Right ventricle myocardium superior (tissue), 1 donor: ENCODE measurements at regions of chr10 and their contacts with region 1.

Region 1: DNA sequence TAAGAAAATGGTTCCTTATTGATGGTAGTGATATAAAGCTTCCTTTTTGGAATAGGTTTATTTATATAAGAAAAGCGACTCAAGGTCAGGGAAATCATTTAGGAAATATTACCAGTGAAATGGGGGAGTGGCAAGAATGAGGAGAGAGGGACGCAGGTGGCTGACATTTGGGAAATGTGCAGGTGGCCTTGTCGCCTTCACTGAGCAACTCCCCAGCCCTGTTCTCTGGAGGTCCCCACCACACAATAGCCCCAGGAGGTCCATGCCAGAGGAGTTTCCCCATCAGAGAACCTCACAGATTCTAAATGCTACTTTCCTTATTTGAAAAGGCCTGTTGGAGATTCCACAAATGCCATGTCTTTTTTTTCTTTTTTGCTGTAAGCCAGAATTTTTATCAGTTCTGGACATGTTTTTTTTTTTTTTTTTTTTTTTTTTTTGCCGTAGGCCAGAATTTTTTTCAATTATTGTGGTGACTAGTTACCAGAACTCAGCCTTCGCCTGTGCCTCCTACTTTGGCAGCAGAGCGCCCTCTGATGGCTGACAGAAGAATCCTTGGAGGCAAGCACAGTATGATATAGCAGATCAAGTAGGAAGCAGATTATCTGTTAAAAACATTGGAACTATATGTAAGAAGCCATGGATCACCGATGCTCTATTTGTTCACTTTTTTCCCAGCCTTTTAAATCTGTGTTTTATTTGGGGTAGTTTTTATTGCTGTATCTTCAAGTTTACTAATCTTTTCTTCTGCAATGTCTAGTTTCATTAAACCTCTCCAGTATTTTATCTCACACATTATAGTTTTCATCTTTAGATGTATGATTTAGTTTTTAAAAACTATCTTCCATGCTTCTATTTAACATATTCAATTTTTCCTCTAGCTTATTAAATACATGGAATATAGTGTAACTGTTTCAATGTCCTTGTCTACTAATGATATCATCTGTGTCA is 18.6 kb downstream of the OPALIN start:
- DNase-seq: peak; percentile 67
- ATAC-seq: peak; percentile 86

Region 2: GRCh38 chr10:96017191-96017687 is 323.0 kb before region 1 on chr10:
- intact Hi-C with region 1: loop called (anchors 10 kb)
- DNase-seq: no peak
- ATAC-seq: peak; percentile 80

Region 3: GRCh38 chr10:96496281-96496925 is 156.2 kb after region 1 on chr10:
- intact Hi-C with region 1: no loop called
- DNase-seq: no peak
- ATAC-seq: no peak